ENCODE measurements at regions of chr5 and their contacts with region 1.

Region 1: DNA sequence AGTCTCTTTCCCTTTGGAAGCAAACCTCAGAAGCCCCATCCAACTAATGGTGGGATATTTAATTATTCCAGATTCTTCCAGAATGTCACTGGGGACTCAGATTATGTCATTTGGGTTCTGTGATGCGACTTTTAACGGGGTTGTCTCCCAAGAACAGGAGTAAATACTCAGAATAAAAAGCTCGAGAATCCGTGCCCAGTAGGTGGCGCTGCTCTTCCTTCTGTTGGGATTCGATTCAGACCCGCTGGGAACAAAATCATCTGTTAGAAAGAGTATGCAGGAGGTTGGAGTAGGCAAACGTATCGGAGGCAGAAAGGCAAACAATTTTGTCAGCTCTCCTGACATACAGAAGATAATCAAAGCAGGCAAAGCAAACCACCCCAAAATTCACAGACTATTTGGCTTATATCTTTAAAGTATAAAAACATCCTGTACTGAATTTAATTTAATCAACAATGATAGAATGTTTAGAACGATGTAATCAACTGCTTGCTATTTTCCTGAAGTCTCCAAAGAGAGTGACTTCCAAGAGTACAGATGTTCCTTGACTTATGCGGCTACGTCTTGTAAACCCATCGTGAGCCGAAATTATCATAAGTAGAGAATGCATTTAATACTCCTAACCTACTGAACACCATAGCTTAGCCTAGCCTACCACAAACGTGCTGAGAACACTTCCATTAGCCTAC is 169.8 kb upstream of the RAI14 start:
- DNase-seq: peak; percentile 83
- ATAC-seq: peak; percentile 49
- H3K4me3 ChIP-seq: peak overlapping the region; percentile 21 to 58 (median 33); a peak in 4 of 6 replicates
- H3K27ac ChIP-seq: peak overlapping the region; percentile 85
- H3K4me1 ChIP-seq: peaks cover 77% of the 10 kb centered on the region
- H3K27me3 ChIP-seq: 0 out of 5 replicates have a peak, but pooled peaks cover 0 to 7% of the 10 kb centered on the region in 2 experiments
- CTCF ChIP-seq: peak; percentile 88
- EP300 ChIP-seq: 0 out of 4 replicates have a peak, but pooled peaks of 1 of the 2 experiments have one; percentile 4
- POLR2A ChIP-seq: no peak
- RAD21 ChIP-seq: peak; percentile 77

Region 2: GRCh38 chr5:34533582-34534522 is 47.5 kb after region 1 on chr5:
- CTCF ChIA-PET with region 1: interaction called, 6 read pairs
- POLR2A ChIA-PET with region 1: no interaction called
- in situ Hi-C with region 1: loop called (anchors 10 kb)
- intact Hi-C with region 1: loop called (anchors 1 kb)
- DNase-seq: peak; percentile 14
- ATAC-seq: no peak
- H3K4me3 ChIP-seq: no peak overlapping the region
- H3K27ac ChIP-seq: no peak overlapping the region
- H3K4me1 ChIP-seq: peaks cover 8% of the 10 kb centered on the region; the same call in 1 of the 2 replicates
- H3K27me3 ChIP-seq: no peaks in the 10 kb centered on the region
- CTCF ChIP-seq: no peak
- EP300 ChIP-seq: no peak
- POLR2A ChIP-seq: no peak
- RAD21 ChIP-seq: no peak

Region 3: GRCh38 chr5:34545164-34546025 is 59.1 kb after region 1 on chr5:
- CTCF ChIA-PET with region 1: no interaction called
- POLR2A ChIA-PET with region 1: no interaction called
- in situ Hi-C with region 1: no loop called
- intact Hi-C with region 1: no loop called
- DNase-seq: no peak
- ATAC-seq: no peak
- H3K4me3 ChIP-seq: no peak overlapping the region
- H3K27ac ChIP-seq: no peak overlapping the region
- H3K4me1 ChIP-seq: peaks cover 23% of the 10 kb centered on the region; the same call in 1 of the 2 replicates
- H3K27me3 ChIP-seq: no peaks in the 10 kb centered on the region
- CTCF ChIP-seq: no peak
- EP300 ChIP-seq: no peak
- POLR2A ChIP-seq: no peak
- RAD21 ChIP-seq: no peak

Region 4: GRCh38 chr5:34656001-34656699 is 169.8 kb after region 1 on chr5 and contains the start of gene RAI14:
- CTCF ChIA-PET with region 1: no interaction called
- POLR2A ChIA-PET with region 1: interaction called, 4 read pairs
- in situ Hi-C with region 1: loop called (anchors 10 kb)
- intact Hi-C with region 1: loop called (anchors 2 kb)
- DNase-seq: peak; percentile 41
- ATAC-seq: peak; percentile 85
- H3K4me3 ChIP-seq: peak within 1 kb of the TSS; percentile 85 to 88 (median 87)
- H3K27ac ChIP-seq: peak within 1 kb of the TSS; percentile 44
- H3K4me1 ChIP-seq: peaks cover 25% of the 10 kb centered on the region
- H3K27me3 ChIP-seq: peaks cover 1 to 4% of the 10 kb centered on the region in 2 experiments; a peak in 3 of 5 replicates
- CTCF ChIP-seq: peak; percentile 45; the same call in 1 of the 2 replicates
- EP300 ChIP-seq: no peak
- POLR2A ChIP-seq: peak in 1 of 2 experiments; percentile 37; a peak in 1 of 4 replicates
- RAD21 ChIP-seq: peak; percentile 74
- total RNA-seq, gene RAI14: 18.2 and 26.6 TPM in 2 replicates

Region 5: GRCh38 chr5:34817563-34818351 is 331.5 kb after region 1 on chr5:
- CTCF ChIA-PET with region 1: no interaction called
- POLR2A ChIA-PET with region 1: no interaction called
- in situ Hi-C with region 1: no loop called
- intact Hi-C with region 1: no loop called
- DNase-seq: no peak
- ATAC-seq: no peak
- H3K4me3 ChIP-seq: no peak overlapping the region
- H3K27ac ChIP-seq: no peak overlapping the region
- H3K4me1 ChIP-seq: peaks cover 13% of the 10 kb centered on the region
- H3K27me3 ChIP-seq: no peaks in the 10 kb centered on the region
- CTCF ChIP-seq: no peak
- EP300 ChIP-seq: no peak
- POLR2A ChIP-seq: no peak
- RAD21 ChIP-seq: no peak

Region 6: DNA sequence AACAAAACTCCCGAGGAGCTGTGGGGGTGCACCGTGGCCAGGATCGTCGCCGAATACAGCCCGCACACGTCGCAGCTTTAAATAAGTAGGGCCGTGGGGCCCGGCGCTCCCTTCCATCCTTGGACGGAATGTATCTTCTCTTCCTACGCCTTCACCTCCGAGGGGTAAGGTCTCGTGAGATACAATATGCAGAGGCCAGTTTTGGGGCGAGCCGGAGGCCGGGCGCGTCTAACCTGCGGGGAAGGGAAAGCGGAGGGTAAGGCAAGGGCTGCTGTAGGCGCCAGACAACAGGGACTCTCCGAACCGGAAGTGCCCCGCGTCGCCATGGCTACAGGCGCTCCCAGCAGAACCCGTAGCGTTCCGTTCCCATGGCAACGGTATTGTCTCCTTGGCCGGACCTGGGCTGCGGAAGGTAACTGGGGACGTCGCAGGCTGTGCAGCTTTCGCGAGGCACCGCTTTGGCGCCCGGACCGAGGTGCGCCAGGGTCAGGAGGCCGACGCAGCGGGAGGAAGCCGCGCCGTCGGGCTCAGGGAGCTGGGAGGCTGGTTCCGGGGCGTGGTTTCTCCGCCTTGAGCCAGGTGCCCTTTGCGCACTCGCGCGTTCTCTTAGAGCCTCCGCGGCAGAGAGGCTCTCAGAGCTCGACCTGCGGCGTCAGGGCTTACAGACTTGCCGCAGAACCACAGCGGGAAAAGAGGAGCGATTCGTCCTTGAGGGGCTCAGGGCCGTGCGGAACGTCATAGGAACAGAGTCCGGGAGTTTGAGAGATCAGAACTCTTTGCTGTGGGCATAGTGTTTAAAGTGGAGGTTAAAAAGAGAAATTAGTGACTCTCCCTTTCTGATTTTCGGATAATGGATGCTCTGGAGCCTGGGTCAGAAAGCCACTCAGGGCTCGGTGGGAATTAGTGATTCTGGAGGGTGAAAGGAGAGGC is 352.7 kb after region 1 on chr5 and contains the start of gene TTC23L:
- CTCF ChIA-PET with region 1: no interaction called
- POLR2A ChIA-PET with region 1: interaction called, 10 read pairs
- in situ Hi-C with region 1: no loop called
- intact Hi-C with region 1: loop called (anchors 2 kb)
- DNase-seq: peak; percentile 96
- ATAC-seq: peak; percentile 97
- H3K4me3 ChIP-seq: peak within 1 kb of the TSS; percentile 67 to 76 (median 74)
- H3K27ac ChIP-seq: peak within 1 kb of the TSS; percentile 84
- H3K4me1 ChIP-seq: peaks cover 23% of the 10 kb centered on the region
- H3K27me3 ChIP-seq: no peaks in the 10 kb centered on the region
- CTCF ChIP-seq: peak; percentile 41
- EP300 ChIP-seq: peak; percentile 42 to 48; a peak in 3 of 4 replicates
- POLR2A ChIP-seq: peak; percentile 94 to 96
- RAD21 ChIP-seq: peak; percentile 66; the same call in 1 of the 2 replicates
- total RNA-seq, gene TTC23L: 1.1 and 1.4 TPM in 2 replicates

Region 7: DNA sequence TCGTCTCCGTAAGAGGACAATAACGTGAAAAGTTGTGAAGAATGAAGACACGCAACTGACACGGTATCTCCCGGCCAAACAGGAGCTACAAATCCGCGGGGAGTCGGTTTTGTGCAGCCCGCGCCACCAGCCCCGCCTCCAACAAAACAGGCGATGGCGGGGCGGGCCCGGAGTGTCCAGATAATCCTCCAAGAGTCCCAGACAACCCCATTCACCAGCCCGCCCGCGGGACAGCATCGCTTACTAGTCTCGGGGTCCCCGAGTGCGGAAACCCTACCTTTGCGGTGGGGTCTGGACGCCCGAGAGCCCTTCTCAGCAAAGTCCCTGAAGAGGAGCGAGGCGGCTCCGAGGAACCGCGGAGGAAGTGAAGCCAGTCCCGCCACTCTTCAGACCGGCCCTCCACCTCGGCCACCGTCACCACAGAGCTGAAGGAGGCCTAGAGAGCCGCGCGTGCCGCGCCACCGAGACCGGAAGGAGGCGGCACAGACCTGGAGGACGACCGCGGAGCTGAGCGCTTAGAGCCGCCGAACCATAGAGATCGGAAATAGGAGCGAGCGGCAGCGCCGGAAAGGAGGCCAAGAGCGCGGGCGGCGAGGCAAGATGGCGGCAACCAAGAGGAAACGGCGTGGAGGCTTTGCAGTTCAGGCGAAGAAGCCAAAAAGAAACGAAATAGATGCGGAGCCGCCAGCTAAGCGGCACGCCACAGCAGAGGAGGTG is 429.0 kb after region 1 on chr5 and contains the starts of genes BRIX1 and RAD1:
- CTCF ChIA-PET with region 1: no interaction called
- POLR2A ChIA-PET with region 1: interaction called, 17 read pairs
- in situ Hi-C with region 1: no loop called
- intact Hi-C with region 1: no loop called
- DNase-seq: peak; percentile 92
- ATAC-seq: peak; percentile 99
- H3K4me3 ChIP-seq: peak within 1 kb of the TSS; percentile 83 to 99 (median 95)
- H3K27ac ChIP-seq: peak within 1 kb of the TSS; percentile 89
- H3K4me1 ChIP-seq: peaks cover 39% of the 10 kb centered on the region
- H3K27me3 ChIP-seq: no peaks in the 10 kb centered on the region; a peak in 1 of 5 replicates
- CTCF ChIP-seq: peak; percentile 54
- EP300 ChIP-seq: no peak; a peak in 1 of 4 replicates
- POLR2A ChIP-seq: peak; percentile 80 to 86
- RAD21 ChIP-seq: no peak
- total RNA-seq, gene BRIX1: 78.4 and 114 TPM in 2 replicates
- total RNA-seq, gene RAD1: 39.1 and 51.0 TPM in 2 replicates

Region 8: DNA sequence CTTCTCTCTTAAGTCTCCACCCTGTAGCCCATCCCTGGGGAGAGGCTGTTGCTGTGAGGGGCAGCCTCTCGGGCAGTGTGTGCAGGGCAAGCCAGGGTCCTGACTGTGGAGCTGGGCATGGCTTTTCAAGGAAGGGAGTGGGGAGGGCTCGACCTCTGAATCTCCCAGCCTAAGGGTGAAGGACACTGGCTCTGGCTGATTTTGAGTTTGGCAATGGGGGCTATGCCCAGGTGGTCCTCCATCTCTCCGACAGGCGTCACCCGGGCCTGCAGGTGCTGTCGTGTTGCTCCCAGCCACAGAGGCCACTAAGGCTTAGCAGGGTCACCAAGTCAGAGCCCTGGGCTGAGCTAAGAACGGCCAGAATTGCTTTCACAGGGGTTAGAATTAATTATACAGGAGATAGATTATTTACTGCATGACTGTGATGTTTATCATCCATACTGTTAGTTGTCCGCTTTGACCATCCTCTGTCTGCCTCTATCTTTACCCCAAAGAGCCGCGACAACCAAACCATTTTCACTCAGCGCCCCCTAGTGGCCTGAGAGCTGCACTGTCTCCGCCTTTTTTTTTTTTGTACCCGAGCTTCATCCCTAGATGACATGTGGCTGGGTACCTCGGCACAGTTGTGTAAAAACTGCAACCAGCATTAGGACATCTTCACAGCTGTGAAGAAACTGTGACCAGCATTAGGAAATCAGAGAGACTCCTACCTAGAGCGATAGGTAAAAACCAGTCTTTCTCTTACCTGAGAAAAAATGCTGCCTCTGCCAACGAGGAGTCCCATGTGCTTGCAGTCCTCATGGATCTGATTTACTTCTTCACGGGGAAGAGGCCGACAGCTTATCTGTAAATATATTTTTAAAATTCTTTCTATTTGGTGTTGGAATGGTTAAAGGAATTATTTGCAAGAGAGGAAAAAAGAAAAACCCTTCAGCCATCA is 517.0 kb after region 1 on chr5:
- CTCF ChIA-PET with region 1: no interaction called
- POLR2A ChIA-PET with region 1: no interaction called
- in situ Hi-C with region 1: loop called (anchors 10 kb)
- intact Hi-C with region 1: no loop called
- DNase-seq: peak; percentile 43
- ATAC-seq: peak; percentile 94
- H3K4me3 ChIP-seq: no peak overlapping the region
- H3K27ac ChIP-seq: no peak overlapping the region
- H3K4me1 ChIP-seq: no peaks in the 10 kb centered on the region
- H3K27me3 ChIP-seq: no peaks in the 10 kb centered on the region
- CTCF ChIP-seq: peak; percentile 87
- EP300 ChIP-seq: no peak
- POLR2A ChIP-seq: no peak
- RAD21 ChIP-seq: peak; percentile 22; the same call in 1 of the 2 replicates

Measured in HepG2 (cell line).